Right ventricle myocardium inferior (tissue), 1 donor: ENCODE measurements at regions of chr9 and their contacts with region 1.

Region 1: GRCh38 chr9:613771-614347 is 227.6 kb upstream of the DMRT1 start:
- DNase-seq: peak; percentile 82
- ATAC-seq: peak; percentile 89

Region 2: GRCh38 chr9:406886-407654 is 206.8 kb before region 1 on chr9:
- intact Hi-C with region 1: loop called (anchors 5 kb)
- DNase-seq: no peak
- ATAC-seq: peak; percentile 79

Region 3: DNA sequence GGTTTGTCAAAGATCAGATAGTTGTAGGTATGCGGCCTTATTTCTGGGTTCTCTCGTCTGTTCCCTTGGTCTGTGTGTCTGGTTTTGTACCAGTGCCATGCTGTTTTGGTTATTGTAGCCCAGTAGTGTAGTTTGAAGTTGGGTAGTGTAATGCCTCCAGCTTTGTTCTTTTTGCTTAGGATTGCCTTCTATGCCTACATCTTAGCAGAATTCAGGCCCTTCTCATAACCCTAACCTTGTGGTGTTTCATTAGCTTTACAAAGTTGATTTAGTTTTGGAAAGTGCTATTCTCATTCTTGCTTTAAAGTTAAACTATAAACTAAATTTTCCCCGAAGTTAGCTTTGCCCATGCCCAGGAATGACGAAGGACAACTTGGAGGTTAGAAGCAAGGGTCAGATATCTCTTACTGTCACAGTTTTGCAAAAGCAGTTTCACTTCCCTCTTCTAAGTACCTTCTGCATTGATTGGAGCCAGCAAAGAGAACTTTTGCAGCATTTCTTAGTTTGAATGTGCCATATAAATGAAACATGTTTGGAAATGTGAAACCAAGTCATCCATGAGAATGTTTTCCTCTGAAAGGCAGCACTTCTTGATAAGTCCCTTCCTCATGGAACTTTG is 46.6 kb before region 1 on chr9:
- intact Hi-C with region 1: loop called (anchors 5 kb)
- DNase-seq: no peak
- ATAC-seq: no peak

Region 4: DNA sequence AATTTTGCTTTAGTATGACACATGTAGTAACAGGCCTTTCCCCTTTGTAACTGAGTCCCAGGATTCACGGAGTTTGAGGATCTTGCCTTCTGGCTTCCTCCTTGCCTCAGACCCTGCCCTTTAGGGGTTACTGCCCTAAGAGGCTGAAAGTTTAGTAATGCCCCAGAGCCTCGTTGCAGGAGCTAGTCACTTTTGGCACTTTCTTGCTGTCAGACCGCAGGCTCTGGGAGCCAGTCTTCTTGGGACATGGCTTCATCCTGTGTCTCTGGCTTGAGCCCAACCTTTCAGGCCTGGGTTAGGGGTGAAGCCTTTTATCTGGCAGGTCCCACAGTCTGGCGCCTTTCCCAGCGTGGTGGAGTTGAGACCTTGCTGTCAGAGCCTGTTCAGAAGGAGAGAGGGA is 42.0 kb after region 1 on chr9:
- intact Hi-C with region 1: no loop called
- DNase-seq: peak; percentile 92
- ATAC-seq: peak; percentile 79

Region 5: GRCh38 chr9:757246-757881 is 143.5 kb after region 1 on chr9:
- intact Hi-C with region 1: loop called (anchors 1 kb)
- DNase-seq: no peak
- ATAC-seq: peak; percentile 71

Region 6: GRCh38 chr9:806285-807156 is 192.7 kb after region 1 on chr9:
- intact Hi-C with region 1: loop called (anchors 5 kb)
- DNase-seq: no peak
- ATAC-seq: no peak

Region 7: DNA sequence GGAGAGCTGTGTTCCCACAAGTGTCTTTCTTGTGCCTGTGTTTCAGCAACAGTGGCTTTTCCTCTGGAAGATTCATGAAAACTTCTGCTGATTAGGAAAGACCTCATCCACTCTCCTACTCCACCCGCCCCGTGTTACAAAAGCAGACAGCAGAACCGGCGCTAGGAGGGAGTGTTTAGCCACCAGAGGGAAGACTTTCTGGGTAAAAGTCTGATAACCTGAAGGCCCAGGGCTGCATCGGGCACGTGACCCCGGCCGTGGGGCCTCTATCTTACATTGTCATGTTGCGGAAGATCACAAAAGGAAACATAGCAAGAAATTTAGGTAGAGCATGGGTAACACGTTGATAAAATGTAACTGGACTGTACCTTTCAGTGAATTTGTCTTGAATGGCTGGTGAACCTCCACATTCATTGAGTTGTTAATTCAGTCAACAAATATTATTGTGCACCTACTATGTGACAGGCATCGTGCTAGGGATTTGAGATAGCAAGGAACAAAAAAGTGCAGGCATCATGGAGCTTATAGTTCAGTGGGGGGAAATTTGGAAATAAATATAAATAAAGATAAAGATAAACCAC is 404.4 kb after region 1 on chr9:
- intact Hi-C with region 1: no loop called
- DNase-seq: no peak
- ATAC-seq: peak; percentile 57